Left ventricle myocardium superior (tissue), 1 donor: ENCODE measurements at regions of chr22 and their contacts with region 1.

Region 1: DNA sequence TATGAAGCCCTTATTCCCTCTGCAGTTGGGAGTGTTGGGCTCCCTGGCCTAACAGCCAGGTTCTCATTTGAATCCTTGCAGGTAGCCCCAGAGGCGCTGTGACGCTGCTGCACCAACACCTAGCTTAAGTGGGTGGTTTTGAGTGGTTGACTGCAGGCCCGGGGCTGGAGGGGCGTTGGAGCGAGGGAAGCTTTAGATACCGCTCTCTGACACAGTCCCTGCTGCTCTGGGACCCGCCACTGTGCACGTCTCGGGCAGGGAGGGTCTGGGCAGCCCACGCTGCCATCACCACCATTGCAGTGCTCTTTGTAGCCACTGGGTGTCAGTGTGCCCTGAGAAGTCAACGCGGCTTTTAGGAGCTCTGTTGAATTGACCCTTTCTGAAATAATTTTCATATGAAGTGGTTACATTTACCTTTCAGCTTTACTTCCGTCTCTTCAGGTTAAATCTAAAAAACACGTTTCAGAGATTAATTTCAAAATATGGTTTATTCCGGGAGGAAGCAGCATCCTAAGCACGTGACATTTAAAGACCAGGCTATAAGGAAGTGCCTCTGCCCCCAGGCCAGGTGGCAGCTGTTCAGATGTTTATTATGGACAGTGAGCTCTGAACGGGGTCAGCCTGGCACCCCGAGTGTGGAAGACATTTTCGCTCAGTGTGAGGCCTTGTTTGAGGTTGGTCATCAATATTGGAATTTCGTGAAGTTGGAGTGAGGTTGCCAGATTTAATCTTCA is 30.9 kb upstream of the PARVB start:
- DNase-seq: peak; percentile 73
- ATAC-seq: peak; percentile 71

Region 2: DNA sequence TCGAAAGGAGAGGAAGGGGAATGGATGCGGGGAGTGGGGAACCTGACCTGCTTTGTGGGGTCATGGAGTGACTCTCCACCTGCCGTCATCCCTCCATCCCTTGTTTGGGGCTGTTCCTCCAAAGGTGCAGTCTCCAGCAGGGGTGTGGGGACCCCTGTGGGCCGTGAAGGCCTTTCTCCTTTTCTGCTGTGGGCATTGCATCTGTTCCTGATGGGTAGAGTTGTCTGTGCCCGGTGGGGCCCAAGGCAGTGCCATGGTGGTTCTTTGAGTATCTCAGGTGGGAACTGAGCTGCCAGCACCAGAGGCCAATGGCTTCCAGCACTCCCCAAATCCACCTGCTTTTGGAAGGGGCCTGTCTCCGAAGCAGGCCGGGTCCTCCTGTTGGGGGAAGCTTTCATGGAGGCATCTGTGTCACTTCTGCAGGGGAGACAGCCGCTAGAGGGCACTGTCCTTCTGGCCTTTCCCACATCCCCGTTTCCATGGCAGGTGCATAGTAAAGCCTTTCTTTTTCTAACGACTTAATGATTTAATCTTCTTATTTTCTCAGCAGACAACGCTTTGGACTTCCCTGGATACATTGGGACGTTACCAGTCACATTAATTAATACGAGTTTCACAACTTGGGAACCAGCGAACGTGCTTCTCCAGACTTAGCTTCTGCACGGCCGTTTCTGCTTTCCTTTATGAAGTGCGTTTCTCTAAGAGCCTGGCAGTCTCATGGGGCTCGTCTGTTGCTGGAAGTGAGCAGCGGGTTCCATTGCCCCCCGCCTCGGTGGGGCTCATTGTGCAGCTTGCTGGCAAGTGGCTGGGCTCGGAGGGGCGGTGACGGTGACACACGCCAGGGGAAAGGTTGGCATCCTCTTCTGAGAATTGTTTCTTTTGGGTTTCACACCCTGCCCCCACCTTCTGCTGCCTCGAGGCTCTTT is 88.0 kb after region 1 on chr22:
- intact Hi-C with region 1: loop called (anchors 5 kb)
- DNase-seq: peak; percentile 86
- ATAC-seq: no peak

Region 3: GRCh38 chr22:44625981-44626687 is 632.9 kb after region 1 on chr22:
- intact Hi-C with region 1: loop called (anchors 10 kb)
- DNase-seq: peak; percentile 76
- ATAC-seq: peak; percentile 81